ENCODE measurements at regions of chr5 and their contacts with region 1.

Region 1: GRCh38 chr5:98349251-98349995 is 424.0 kb upstream of the RGMB start:
- DNase-seq: peak; percentile 4
- ATAC-seq: no peak
- H3K4me3 ChIP-seq: no peak overlapping the region
- H3K27ac ChIP-seq: no peak overlapping the region
- H3K4me1 ChIP-seq: no peaks in the 10 kb centered on the region
- H3K27me3 ChIP-seq: no peaks in the 10 kb centered on the region
- CTCF ChIP-seq: peak; percentile 65
- EP300 ChIP-seq: no peak
- POLR2A ChIP-seq: no peak
- RAD21 ChIP-seq: peak; percentile 47; the same call in 1 of the 2 replicates

Region 2: DNA sequence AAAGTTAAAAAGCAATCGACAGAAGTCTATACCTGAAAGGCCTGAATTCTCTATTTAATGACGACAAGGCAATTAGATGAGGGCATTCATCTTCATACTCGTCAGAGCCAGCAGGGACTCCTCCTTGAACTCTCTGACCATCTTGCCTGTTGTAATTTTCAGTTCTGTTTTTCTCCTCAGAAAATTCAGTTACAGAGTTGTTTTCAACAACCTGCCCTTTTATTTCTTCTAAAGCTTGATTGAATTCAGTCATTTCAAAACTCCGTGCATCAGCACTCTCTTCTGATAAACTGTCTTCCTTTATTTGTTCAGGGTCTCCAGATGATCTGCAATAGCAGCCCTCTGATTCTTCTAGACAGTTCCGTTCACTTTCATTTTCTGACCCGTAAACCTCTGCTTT is 1182.0 kb before region 1 on chr5:
- CTCF ChIA-PET with region 1: no interaction called
- POLR2A ChIA-PET with region 1: no interaction called
- in situ Hi-C with region 1: no loop called
- intact Hi-C with region 1: loop called (anchors 5 kb)
- DNase-seq: no peak
- ATAC-seq: no peak
- H3K4me3 ChIP-seq: no peak overlapping the region
- H3K27ac ChIP-seq: no peak overlapping the region
- H3K4me1 ChIP-seq: peaks cover 17% of the 10 kb centered on the region
- H3K27me3 ChIP-seq: no peaks in the 10 kb centered on the region
- CTCF ChIP-seq: no peak
- EP300 ChIP-seq: no peak
- POLR2A ChIP-seq: no peak
- RAD21 ChIP-seq: no peak

Region 3: DNA sequence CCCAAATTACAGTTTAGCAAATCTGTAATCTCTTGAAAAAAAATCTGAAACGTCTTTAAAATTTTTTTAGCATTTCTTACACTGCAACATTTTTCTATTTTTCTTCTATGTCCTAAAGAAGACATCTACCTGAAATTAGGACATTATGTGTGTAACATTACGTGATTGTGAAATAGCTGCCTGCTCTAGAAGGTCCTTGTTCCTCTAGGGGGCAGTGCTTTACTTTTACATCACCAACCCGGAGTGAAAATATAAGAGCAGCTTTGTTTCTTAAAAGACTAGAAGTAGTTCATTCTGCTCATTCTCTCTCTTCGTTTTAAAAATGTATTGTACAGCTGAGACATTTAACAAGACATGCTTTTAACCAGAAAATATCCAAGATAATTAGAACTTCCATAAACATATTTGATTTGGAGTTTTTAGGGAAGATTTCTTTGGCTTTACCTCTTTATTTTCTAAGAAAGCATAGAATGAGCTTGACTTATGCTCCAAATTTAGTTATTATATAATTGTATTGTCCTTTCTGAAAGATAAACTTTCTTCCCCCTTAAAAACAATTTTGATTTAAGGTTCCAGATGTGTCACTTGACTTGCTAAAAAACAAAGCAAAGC is 1118.3 kb before region 1 on chr5:
- CTCF ChIA-PET with region 1: no interaction called
- POLR2A ChIA-PET with region 1: no interaction called
- in situ Hi-C with region 1: no loop called
- intact Hi-C with region 1: loop called (anchors 2 kb)
- DNase-seq: peak; percentile 70
- ATAC-seq: peak; percentile 80
- H3K4me3 ChIP-seq: no peak overlapping the region
- H3K27ac ChIP-seq: no peak overlapping the region
- H3K4me1 ChIP-seq: no peaks in the 10 kb centered on the region
- H3K27me3 ChIP-seq: no peaks in the 10 kb centered on the region
- CTCF ChIP-seq: peak; percentile 78
- EP300 ChIP-seq: no peak; a peak in 1 of 4 replicates
- POLR2A ChIP-seq: no peak
- RAD21 ChIP-seq: no peak

Region 4: DNA sequence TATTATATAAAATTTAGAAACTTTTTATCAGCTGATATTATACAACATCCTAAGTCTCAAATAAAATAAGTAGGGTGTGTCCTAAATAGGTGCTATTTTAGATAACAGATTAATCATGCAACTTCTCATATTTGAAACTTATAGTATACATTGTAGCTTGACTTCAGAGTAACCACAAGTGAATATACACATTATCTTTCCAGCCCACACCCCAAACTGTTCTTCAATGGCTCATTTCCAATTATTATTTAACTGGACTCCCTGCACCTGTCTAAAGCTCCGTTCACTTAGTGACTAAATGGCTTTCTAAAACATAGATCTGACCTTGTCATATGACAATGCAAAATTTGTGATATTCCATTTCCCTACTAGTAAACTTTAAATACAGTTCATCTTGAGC is 66.9 kb before region 1 on chr5:
- CTCF ChIA-PET with region 1: no interaction called
- POLR2A ChIA-PET with region 1: no interaction called
- in situ Hi-C with region 1: no loop called
- intact Hi-C with region 1: no loop called
- DNase-seq: no peak
- ATAC-seq: no peak
- H3K4me3 ChIP-seq: no peak overlapping the region
- H3K27ac ChIP-seq: no peak overlapping the region
- H3K4me1 ChIP-seq: no peaks in the 10 kb centered on the region
- H3K27me3 ChIP-seq: no peaks in the 10 kb centered on the region
- CTCF ChIP-seq: no peak
- EP300 ChIP-seq: no peak
- POLR2A ChIP-seq: no peak
- RAD21 ChIP-seq: no peak

Measured in HepG2 (cell line).